ENCODE measurements at regions of chr12 and their contacts with region 1.

Region 1: DNA sequence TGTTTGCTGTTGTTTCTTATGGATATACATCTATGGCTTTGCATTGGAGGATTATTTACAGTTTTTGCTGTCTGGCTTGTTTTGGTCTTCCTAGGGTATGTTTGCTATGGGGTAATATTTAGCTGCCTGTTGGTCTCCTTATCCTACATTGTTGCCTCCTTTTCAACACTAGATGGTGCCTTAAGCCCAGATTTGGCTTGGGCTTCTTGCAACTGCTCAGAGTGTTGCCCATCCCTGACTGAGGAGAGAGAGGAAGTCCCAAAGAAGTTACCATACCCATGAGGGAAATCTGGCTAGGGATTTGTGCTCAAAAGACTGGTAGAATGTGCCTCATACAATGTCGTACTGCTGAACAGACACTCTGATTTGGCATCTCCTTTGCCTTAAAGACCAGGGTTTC is 94.6 kb upstream of the MUCL1 start:
- DNase-seq: no peak
- H3K4me3 Mint-ChIP-seq: no peak overlapping the region
- H3K27ac Mint-ChIP-seq: no peak overlapping the region
- H3K4me1 Mint-ChIP-seq: peaks cover 6% of the 10 kb centered on the region
- H3K27me3 Mint-ChIP-seq: no peaks in the 10 kb centered on the region

Region 2: GRCh38 chr12:54631988-54632728 is 127.6 kb before region 1 on chr12:
- CTCF ChIA-PET with region 1: no interaction called
- POLR2A ChIA-PET with region 1: no interaction called
- intact Hi-C with region 1: no loop called
- DNase-seq: no peak
- H3K4me3 Mint-ChIP-seq: no peak overlapping the region
- H3K27ac Mint-ChIP-seq: no peak overlapping the region
- H3K4me1 Mint-ChIP-seq: no peaks in the 10 kb centered on the region
- H3K27me3 Mint-ChIP-seq: peaks cover 9% of the 10 kb centered on the region

Region 3: GRCh38 chr12:54734196-54734950 is 25.4 kb before region 1 on chr12:
- CTCF ChIA-PET with region 1: no interaction called
- POLR2A ChIA-PET with region 1: no interaction called
- intact Hi-C with region 1: no loop called
- DNase-seq: no peak
- H3K4me3 Mint-ChIP-seq: no peak overlapping the region
- H3K27ac Mint-ChIP-seq: no peak overlapping the region
- H3K4me1 Mint-ChIP-seq: peaks cover 25% of the 10 kb centered on the region
- H3K27me3 Mint-ChIP-seq: no peaks in the 10 kb centered on the region

Region 4: DNA sequence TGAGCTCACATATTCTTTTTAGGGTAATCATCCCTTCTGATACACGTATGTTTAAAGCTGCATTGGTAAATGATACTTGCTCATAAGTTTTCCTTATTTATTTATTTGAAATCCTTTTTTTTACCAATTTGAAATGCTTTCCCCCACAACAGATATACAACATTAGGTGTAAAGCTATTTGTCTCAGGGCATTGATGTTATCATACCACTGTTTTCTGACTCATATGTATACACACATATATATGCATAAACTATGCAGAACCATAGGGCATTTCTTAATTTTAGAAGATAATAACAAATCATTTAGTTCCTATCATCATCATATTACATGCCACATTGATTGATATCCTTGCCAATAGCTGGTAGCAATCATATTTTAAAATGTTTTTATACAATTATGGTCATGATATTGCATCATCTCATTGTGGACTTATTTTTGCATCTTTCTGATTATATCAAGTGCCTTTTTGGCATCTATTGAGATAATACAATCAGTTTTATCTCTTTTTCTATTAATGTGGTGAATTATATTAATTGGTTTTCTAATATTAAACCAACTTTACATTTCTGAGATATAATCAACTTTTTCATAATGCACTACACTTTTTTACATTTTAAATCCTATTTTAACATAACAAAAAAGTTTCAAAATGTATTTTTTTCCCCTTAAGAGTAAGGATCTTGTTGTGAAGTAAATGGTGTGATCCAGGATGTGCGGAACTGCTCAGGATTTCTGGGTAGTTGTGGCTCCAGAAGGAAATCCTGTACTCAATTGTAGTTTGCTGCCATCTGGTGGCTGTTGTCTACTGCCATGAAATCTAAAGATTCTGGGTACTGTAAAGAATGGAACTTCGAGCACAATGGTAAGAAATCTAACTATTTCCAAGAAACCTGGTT is 383.2 kb after region 1 on chr12:
- CTCF ChIA-PET with region 1: no interaction called
- POLR2A ChIA-PET with region 1: no interaction called
- intact Hi-C with region 1: loop called (anchors 10 kb)
- DNase-seq: peak; percentile 41
- H3K4me3 Mint-ChIP-seq: no peak overlapping the region
- H3K27ac Mint-ChIP-seq: no peak overlapping the region
- H3K4me1 Mint-ChIP-seq: peaks cover 5% of the 10 kb centered on the region
- H3K27me3 Mint-ChIP-seq: no peaks in the 10 kb centered on the region

Measured in activated CD4-positive, alpha-beta memory T cell treated with anti-CD3 and anti-CD28 coated beads for 36 hours (primary cell).